ENCODE measurements at regions of chr1 and their contacts with region 1.

Region 1: DNA sequence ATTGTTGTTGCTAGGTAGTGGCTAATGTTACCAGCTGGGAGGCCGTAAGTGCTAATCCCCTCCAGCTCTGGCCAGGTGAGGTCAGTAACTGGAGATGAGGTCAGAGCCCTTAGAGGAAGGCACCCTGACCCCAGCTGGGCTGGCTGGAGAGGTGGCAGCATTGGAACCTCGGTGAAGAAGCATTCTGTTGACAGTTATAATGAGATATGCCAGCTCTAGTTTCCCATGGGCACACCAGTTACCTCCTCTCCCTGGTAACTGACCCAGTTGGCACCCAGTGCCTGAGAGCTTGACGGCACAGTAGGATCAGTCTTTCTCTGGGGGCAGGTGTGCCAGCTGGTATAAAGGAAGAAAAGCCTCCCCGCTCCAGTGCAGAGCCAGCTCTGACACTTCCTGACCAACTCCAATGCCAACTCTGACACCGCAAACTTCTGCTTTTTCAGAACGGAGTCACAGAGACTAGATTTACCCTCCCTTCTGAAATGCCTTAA is 35.0 kb upstream of the SLC2A1 start:
- DNase-seq: no peak
- ATAC-seq: peak; percentile 93
- H3K4me3 Mint-ChIP-seq: no peak overlapping the region
- H3K27ac Mint-ChIP-seq: peak overlapping the region; percentile 5
- H3K4me1 Mint-ChIP-seq: peaks cover 11% of the 10 kb centered on the region
- H3K27me3 Mint-ChIP-seq: no peaks in the 10 kb centered on the region
- CTCF ChIP-seq: no peak

Region 2: GRCh38 chr1:42931108-42931539 is 62.6 kb before region 1 on chr1:
- CTCF ChIA-PET with region 1: no interaction called
- POLR2A ChIA-PET with region 1: interaction called, 7 read pairs
- intact Hi-C with region 1: loop called (anchors 5 kb)
- DNase-seq: peak; percentile 47
- ATAC-seq: peak; percentile 16
- H3K4me3 Mint-ChIP-seq: peak overlapping the region; percentile 69
- H3K27ac Mint-ChIP-seq: peak overlapping the region; percentile 91
- H3K4me1 Mint-ChIP-seq: peaks cover 75% of the 10 kb centered on the region
- H3K27me3 Mint-ChIP-seq: no peaks in the 10 kb centered on the region
- CTCF ChIP-seq: no peak

Region 3: DNA sequence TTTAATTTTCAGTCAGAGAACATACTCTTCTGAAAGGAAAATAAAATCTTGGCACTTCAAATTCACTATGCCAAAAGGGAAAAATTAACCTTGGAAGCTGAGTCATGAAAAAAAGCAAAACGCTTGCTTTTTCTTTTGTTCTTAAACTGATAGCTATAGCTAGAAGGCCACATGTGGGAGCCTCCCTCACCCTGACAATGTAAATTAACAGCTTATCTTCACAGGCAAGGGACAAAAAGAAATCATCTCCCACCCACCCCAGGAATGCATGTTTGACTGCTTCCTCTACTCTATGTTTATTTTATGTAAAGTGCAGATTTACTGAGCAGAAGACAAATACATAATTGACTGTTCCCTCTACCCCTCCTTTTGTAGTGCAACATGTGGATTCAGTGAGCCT is 140.4 kb after region 1 on chr1:
- CTCF ChIA-PET with region 1: no interaction called
- POLR2A ChIA-PET with region 1: no interaction called
- intact Hi-C with region 1: no loop called
- DNase-seq: no peak
- ATAC-seq: no peak
- H3K4me3 Mint-ChIP-seq: no peak overlapping the region
- H3K27ac Mint-ChIP-seq: no peak overlapping the region
- H3K4me1 Mint-ChIP-seq: no peaks in the 10 kb centered on the region
- H3K27me3 Mint-ChIP-seq: peaks cover 38% of the 10 kb centered on the region
- CTCF ChIP-seq: no peak

Region 4: DNA sequence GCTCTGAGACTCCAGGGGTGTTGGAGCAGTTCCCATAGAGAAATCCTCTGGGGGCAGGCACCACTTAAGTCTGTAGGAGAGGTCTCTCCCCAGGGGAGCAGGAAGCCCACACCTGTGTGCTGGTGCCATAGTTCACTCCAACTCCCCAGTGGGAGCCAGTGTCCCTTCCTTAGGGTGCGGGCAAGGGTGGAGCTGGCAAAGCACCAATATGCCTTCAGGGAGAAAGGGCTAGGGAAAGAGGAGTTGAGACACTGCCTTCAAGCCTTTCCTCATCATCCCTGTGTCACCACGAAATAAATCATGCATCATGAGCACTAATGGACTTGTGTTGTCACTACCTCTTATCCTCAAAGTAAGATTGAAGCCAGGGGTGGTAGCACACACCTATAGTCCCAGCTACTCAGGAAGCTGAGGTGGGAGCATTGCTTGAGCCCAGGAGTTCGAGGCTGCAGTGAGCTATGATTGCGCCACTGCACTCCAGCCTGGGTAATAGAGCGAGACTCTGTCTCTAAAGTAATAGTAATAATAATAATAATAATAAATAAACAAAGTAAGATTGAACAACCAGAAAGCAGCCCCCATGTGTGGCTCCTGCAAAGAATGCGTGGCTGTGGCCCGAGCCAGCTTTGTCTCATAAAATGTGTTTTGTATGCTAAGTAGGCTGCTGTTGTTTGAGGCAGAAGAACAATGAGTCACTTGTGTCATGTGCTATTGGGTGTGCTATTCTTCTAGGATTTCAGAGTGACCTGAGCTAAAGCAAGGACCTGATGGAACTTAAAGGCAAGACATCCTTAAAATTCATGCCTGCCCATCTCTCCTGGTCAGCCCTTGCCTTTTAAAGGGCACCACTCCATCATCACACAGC is 300.5 kb after region 1 on chr1:
- CTCF ChIA-PET with region 1: no interaction called
- POLR2A ChIA-PET with region 1: no interaction called
- intact Hi-C with region 1: no loop called
- DNase-seq: no peak
- ATAC-seq: no peak
- H3K4me3 Mint-ChIP-seq: no peak overlapping the region
- H3K27ac Mint-ChIP-seq: no peak overlapping the region
- H3K4me1 Mint-ChIP-seq: no peaks in the 10 kb centered on the region
- H3K27me3 Mint-ChIP-seq: no peaks in the 10 kb centered on the region
- CTCF ChIP-seq: no peak

Region 5: DNA sequence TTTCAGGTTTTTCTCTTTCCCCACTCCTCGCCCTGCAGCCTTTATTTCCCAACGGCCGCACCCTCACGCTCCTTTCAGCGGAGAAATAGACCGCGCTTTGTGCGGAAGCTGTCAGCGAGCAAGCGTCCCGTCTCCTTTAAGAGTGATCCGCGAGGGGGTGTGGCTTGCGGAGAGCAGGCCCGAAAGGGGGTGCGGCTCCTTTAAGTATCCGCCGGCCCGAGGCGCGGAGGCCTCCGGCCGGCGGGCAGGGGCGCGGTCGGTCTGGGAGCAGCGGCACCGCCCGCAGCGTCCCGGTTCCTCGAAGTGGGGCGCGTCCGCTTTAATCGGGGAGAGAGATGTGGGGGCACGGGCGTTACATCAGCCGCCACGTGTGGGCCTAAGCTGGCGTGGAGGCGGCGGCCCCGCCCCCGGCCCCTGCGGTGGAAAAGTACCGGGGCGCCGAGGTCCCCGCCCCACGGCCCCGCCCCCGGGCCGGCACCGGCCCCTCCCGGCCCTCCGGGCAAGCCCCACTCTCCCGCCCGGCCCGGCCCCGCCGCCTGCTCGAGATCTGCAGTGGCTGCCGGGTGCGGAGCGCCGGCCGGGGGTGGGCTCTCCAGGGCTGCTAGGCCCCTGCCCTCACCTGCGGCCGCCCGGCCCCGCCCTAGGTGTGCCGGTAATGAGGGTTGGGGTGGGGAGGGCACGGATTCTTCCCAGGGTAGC is 1036.4 kb after region 1 on chr1:
- CTCF ChIA-PET with region 1: no interaction called
- POLR2A ChIA-PET with region 1: no interaction called
- intact Hi-C with region 1: no loop called
- DNase-seq: peak; percentile 93
- ATAC-seq: peak; percentile 76
- H3K4me3 Mint-ChIP-seq: peak overlapping the region; percentile 95
- H3K27ac Mint-ChIP-seq: peak overlapping the region; percentile 97
- H3K4me1 Mint-ChIP-seq: peaks cover 32% of the 10 kb centered on the region
- H3K27me3 Mint-ChIP-seq: no peaks in the 10 kb centered on the region
- CTCF ChIP-seq: no peak

Measured in activated B cell treated with CpG ODN at 0.5 μM for 24 hours (primary cell).